ENCODE measurements at regions of chr15 and their contacts with region 1.

Region 1: DNA sequence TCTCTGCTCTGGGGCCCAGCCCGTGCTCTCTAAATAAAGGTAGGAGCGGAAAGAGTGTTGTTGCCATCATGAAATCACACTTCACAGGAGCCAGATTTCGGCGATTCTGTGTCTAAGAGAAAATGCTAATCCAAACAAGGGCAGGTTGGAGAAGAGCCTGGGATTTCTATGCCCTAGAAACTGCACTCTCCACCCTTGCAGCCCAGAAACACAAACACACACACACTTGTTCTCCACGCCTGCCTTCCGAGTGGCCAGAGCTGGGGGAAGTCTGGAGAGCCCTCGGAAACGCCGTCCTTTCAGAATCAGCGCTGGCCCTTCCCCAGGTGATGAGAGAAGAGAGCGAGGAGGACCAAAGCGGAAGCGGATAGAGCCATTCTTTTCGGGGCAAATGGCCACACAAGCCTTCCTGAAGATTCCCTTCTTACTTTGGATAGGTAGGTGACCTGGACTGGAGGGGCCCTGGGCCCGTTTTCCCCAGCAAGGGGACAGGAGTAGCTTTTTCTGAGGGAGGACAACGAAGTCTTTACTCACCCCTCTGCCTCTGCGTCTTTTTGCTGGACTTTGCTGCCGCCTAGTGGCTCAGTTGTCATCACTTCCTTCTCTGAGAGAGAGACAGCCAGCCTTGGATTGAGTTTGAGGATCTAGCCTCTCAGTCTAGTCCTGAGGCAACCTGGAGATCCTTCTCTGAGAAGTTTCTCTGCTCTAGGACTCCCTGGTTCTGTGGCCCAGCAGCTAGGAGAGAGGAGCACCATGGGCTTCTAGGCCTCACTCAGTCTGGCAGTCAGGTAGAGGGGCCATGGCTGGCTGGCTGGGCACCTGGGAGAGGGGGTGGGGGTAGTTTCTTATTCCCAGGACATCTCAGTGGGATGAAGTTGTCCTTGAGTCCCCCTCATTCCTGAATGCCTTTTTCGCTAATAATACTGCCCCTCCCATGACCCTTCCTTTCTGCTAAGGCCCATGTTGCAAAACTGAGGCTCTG is 37.7 kb downstream of the SENP8 start:
- DNase-seq: peak; percentile 62
- ATAC-seq: peak; percentile 99
- H3K4me3 ChIP-seq: peak overlapping the region; percentile 59
- H3K27ac ChIP-seq: peak overlapping the region; percentile 67; the same call in 1 of the 2 replicates
- H3K4me1 ChIP-seq: no peaks in the 10 kb centered on the region
- H3K27me3 ChIP-seq: no peaks in the 10 kb centered on the region
- CTCF ChIP-seq: peak; percentile 88 to 96 (median 94)
- EP300 ChIP-seq: no peak
- POLR2A ChIP-seq: no peak
- RAD21 ChIP-seq: peak; percentile 99

Region 2: GRCh38 chr15:71455107-71455506 is 700.8 kb before region 1 on chr15:
- CTCF ChIA-PET with region 1: no interaction called
- POLR2A ChIA-PET with region 1: no interaction called
- RAD21 ChIA-PET with region 1: no interaction called
- SMC1A ChIA-PET with region 1: no interaction called
- in situ Hi-C with region 1: loop called (anchors 10 kb)
- intact Hi-C with region 1: no loop called
- DNase-seq: no peak
- ATAC-seq: no peak
- H3K4me3 ChIP-seq: no peak overlapping the region
- H3K27ac ChIP-seq: no peak overlapping the region
- H3K4me1 ChIP-seq: no peaks in the 10 kb centered on the region
- H3K27me3 ChIP-seq: peaks cover 0 to 4% of the 10 kb centered on the region in 2 experiments; a peak in 1 of 4 replicates
- CTCF ChIP-seq: no peak
- EP300 ChIP-seq: no peak
- POLR2A ChIP-seq: no peak
- RAD21 ChIP-seq: no peak

Region 3: DNA sequence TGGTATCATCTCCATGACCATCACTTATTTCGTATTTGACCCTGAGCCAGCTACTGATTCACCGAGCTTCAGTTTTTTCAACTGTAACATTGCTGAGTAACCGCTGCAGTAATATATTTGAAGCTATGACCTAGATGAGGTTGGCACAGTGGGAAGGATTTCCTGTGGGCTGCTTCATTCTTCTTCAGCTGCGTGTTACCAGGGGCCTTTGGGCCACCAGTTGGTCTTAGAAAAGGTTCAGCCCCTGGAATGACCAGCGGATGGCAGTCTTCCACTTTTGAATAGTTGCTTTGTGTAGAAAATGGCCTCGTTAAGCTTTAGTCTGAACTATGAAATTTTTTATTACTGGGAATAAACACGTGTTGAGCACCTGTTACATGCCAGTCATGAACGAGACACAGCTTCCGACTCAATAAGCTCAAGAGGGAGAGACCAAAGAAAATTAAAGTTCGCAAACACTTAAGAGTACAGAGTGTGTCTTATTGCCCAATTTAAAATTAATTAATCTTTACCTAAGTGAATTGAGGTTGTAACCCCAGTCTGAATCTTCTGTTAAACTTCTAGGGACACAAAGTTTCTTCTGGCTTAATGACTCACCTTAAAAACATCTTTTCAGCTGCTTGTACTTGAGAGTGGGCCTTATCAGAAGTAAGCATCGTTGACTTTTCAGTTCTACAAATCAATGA is 403.2 kb before region 1 on chr15:
- CTCF ChIA-PET with region 1: interaction called, 20 read pairs
- POLR2A ChIA-PET with region 1: no interaction called
- RAD21 ChIA-PET with region 1: interaction called, 7 read pairs
- SMC1A ChIA-PET with region 1: interaction called, 7 read pairs
- in situ Hi-C with region 1: loop called (anchors 5 kb)
- intact Hi-C with region 1: no loop called
- DNase-seq: no peak
- ATAC-seq: peak; percentile 45; the same call in 2 of the 3 replicates
- H3K4me3 ChIP-seq: no peak overlapping the region
- H3K27ac ChIP-seq: no peak overlapping the region
- H3K4me1 ChIP-seq: no peaks in the 10 kb centered on the region
- H3K27me3 ChIP-seq: no peaks in the 10 kb centered on the region; a peak in 2 of 4 replicates
- CTCF ChIP-seq: peak; percentile 38 to 55 (median 45); a peak in 5 of 6 replicates
- EP300 ChIP-seq: no peak
- POLR2A ChIP-seq: no peak
- RAD21 ChIP-seq: peak; percentile 70

Region 4: DNA sequence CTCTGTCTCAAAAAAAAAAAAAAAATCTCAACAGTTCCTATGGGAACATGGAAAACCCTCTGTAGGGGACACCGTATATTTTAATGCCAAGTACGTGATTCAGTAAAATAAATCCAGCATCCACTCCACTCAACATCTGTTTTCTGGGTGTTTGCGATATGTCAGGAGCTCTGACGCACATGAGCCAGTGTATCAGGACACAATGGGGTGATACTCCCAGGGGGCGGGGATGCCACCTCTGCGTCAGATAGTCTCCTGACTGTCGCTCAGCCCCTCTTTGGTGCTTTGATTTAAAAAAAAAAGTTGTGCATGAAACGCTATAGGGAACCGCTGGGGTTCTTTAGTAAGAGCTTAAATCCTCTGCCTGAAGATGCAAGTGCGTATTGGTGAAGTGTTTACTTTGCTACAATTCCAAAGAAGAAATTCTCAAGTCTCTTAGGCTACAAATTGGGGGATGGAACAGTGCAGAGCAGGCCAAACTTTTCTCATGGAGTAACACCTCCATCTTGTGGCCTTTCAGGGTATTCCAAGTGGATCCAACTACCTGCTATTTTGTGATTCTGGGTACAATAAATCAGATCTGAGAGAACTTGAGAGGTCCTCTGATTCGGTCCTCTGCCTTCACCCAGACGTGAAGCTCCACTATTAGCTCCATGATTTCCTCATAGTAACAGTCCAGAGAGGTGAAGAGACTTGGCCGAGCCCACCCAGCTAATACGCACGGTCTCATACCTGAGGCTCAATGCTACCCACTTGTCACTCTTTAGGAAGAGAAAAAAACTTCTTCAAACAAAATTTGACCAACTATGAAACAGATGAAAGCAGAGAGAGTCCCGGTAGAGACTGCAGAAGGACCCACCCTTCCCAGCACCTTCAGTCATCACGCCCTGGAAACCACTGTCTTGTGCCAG is 354.8 kb before region 1 on chr15:
- CTCF ChIA-PET with region 1: interaction called, 69 read pairs
- POLR2A ChIA-PET with region 1: no interaction called
- RAD21 ChIA-PET with region 1: interaction called, 14 read pairs
- SMC1A ChIA-PET with region 1: interaction called, 26 read pairs
- in situ Hi-C with region 1: loop called (anchors 10 kb)
- intact Hi-C with region 1: loop called (anchors 2 kb)
- DNase-seq: no peak
- ATAC-seq: peak; percentile 78
- H3K4me3 ChIP-seq: no peak overlapping the region
- H3K27ac ChIP-seq: no peak overlapping the region
- H3K4me1 ChIP-seq: peaks cover 10% of the 10 kb centered on the region
- H3K27me3 ChIP-seq: no peaks in the 10 kb centered on the region
- CTCF ChIP-seq: peak; percentile 65 to 86 (median 72); a peak in 5 of 6 replicates
- EP300 ChIP-seq: no peak
- POLR2A ChIP-seq: no peak
- RAD21 ChIP-seq: peak; percentile 96

Region 5: GRCh38 chr15:72042839-72043238 is 113.1 kb before region 1 on chr15:
- CTCF ChIA-PET with region 1: interaction called, 12 read pairs
- POLR2A ChIA-PET with region 1: interaction called, 3 read pairs
- RAD21 ChIA-PET with region 1: interaction called, 8 read pairs
- SMC1A ChIA-PET with region 1: interaction called, 13 read pairs
- in situ Hi-C with region 1: no loop called
- intact Hi-C with region 1: loop called (anchors 2 kb)
- DNase-seq: no peak
- ATAC-seq: peak; percentile 30; the same call in 1 of the 3 replicates
- H3K4me3 ChIP-seq: no peak overlapping the region
- H3K27ac ChIP-seq: no peak overlapping the region
- H3K4me1 ChIP-seq: no peaks in the 10 kb centered on the region
- H3K27me3 ChIP-seq: no peaks in the 10 kb centered on the region
- CTCF ChIP-seq: peak in 2 of 3 experiments; percentile 16 to 18; a peak in 1 of 6 replicates
- EP300 ChIP-seq: no peak
- POLR2A ChIP-seq: no peak
- RAD21 ChIP-seq: peak; percentile 32

Region 6: GRCh38 chr15:72117486-72118399 is 38.2 kb before region 1 on chr15 and contains the start of gene MYO9A:
- CTCF ChIA-PET with region 1: interaction called, 13 read pairs
- POLR2A ChIA-PET with region 1: interaction called, 5 read pairs
- RAD21 ChIA-PET with region 1: interaction called, 9 read pairs
- SMC1A ChIA-PET with region 1: interaction called, 5 read pairs
- in situ Hi-C with region 1: no loop called
- intact Hi-C with region 1: loop called (anchors 1 kb)
- DNase-seq: peak; percentile 96
- ATAC-seq: peak; percentile 86
- H3K4me3 ChIP-seq: peak within 1 kb of the TSS; percentile 94
- H3K27ac ChIP-seq: peak within 1 kb of the TSS; percentile 91
- H3K4me1 ChIP-seq: peaks cover 8% of the 10 kb centered on the region
- H3K27me3 ChIP-seq: no peaks in the 10 kb centered on the region
- CTCF ChIP-seq: peak in 2 of 3 experiments; percentile 14 to 19; a peak in 3 of 6 replicates
- EP300 ChIP-seq: no peak
- POLR2A ChIP-seq: peak; percentile 86
- RAD21 ChIP-seq: no peak
- polyA plus RNA-seq, gene MYO9A: 3.3 to 5.9 TPM